Posterior cingulate gyrus (tissue), 11 donors: ENCODE measurements at regions of chr1 and their contacts with region 1.

Region 1: DNA sequence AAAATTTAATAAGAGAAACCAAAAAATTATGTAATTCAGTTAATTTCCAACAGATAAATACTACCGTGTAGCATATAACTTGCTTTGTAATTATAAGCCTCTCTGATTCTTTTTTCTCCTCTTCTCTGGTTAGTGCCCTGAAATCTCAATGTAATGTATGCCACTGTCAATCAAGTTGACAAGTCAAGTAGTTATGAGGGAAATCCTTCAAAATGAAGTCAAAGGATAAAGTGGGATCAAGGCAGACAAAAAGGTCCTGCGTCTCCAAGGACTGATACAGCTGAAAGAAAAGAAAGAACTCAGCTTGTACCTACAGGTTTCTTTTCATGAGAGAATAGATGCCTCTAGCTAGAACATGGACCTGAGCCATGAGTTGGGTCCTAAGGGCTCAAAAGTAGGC is 19.8 kb downstream of the VPS45 start:
- DNase-seq: no peak

Region 2: GRCh38 chr1:150154143-150154542 is 66.7 kb after region 1 on chr1:
- intact Hi-C with region 1: loop called (anchors 2 kb)
- DNase-seq: no peak